ENCODE measurements at regions of chr2 and their contacts with region 1.

Region 1: DNA sequence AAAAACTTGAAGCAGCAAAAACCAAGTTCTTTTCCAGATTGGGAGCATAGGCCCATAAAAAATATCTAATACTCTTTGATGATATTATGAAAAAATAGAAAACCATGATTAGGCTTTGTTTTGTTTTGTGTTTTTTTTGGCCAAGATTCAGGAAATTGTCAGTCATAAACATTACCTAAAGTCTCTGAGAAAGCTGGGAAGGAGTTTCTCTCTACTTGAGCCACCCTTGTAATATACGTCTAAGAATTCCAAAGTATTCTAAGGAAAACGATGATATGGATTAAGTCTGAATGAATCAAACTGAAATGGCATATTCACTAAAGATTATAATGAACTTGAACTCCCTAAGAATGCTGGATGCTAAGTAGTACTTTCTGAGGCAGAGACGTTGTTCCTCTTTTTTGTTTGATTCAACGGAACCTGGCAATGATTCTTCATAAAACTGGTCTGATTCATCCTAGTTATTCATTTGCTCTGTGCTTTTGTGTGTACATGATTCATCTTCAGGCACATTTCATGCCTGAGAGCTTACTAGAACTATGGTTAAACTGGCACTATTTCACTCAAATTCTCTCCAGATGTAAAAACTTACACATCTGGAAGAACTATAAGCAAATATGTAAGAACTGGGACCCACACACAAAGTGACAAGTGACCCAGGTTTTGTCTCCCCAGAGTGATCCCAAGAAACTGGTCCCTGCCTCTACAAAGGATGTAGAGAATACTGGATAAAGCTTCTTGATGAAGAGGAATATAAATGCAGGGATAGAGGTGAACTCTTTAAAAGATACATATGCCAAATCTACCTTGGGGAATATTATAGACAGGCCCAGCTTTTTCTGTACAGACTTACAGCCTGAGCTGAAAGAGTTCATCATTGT is 159.7 kb downstream of the DOCK10 start:
- DNase-seq: peak; percentile 87
- ATAC-seq: peak; percentile 84
- H3K4me3 ChIP-seq: no peak overlapping the region
- H3K27ac ChIP-seq: peak overlapping the region; percentile 72
- H3K4me1 ChIP-seq: peaks cover 50% of the 10 kb centered on the region
- H3K27me3 ChIP-seq: no peaks in the 10 kb centered on the region
- CTCF ChIP-seq: no peak

Region 2: GRCh38 chr2:224816816-224817215 is 65.7 kb before region 1 on chr2:
- CTCF ChIA-PET with region 1: no interaction called
- POLR2A ChIA-PET with region 1: no interaction called
- intact Hi-C with region 1: loop called (anchors 5 kb)
- DNase-seq: peak; percentile 82
- ATAC-seq: peak; percentile 88
- H3K4me3 ChIP-seq: no peak overlapping the region
- H3K27ac ChIP-seq: peak overlapping the region; percentile 28
- H3K4me1 ChIP-seq: peaks cover 23% of the 10 kb centered on the region
- H3K27me3 ChIP-seq: no peaks in the 10 kb centered on the region
- CTCF ChIP-seq: no peak

Region 3: DNA sequence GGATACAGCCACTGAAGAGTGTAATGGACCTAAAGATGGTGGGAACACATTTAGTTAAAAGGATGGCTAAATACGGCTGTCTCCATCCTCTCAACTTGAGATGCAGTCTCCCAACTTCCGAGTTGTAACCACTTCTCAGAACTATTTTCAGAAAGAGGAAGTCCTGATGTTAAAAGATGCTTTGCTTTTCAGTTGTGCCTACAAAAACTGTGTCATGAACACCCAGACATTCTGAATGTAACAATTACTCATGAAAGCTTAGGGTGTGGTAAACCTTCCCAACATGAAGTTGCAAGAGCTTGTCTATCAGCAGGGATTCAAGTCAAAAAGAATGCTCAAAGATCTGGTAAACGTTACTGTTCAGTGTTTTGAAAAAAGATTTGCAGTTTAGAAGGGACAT is 11.8 kb after region 1 on chr2:
- CTCF ChIA-PET with region 1: no interaction called
- POLR2A ChIA-PET with region 1: no interaction called
- intact Hi-C with region 1: no loop called
- DNase-seq: no peak
- ATAC-seq: no peak
- H3K4me3 ChIP-seq: no peak overlapping the region
- H3K27ac ChIP-seq: no peak overlapping the region
- H3K4me1 ChIP-seq: no peaks in the 10 kb centered on the region
- H3K27me3 ChIP-seq: no peaks in the 10 kb centered on the region
- CTCF ChIP-seq: no peak

Region 4: GRCh38 chr2:225025917-225026571 is 143.5 kb after region 1 on chr2:
- CTCF ChIA-PET with region 1: no interaction called
- POLR2A ChIA-PET with region 1: no interaction called
- intact Hi-C with region 1: no loop called
- DNase-seq: peak; percentile 55
- ATAC-seq: peak; percentile 42; the same call in 1 of the 2 replicates
- H3K4me3 ChIP-seq: no peak overlapping the region
- H3K27ac ChIP-seq: no peak overlapping the region
- H3K4me1 ChIP-seq: peaks cover 24% of the 10 kb centered on the region
- H3K27me3 ChIP-seq: no peaks in the 10 kb centered on the region
- CTCF ChIP-seq: no peak

Region 5: DNA sequence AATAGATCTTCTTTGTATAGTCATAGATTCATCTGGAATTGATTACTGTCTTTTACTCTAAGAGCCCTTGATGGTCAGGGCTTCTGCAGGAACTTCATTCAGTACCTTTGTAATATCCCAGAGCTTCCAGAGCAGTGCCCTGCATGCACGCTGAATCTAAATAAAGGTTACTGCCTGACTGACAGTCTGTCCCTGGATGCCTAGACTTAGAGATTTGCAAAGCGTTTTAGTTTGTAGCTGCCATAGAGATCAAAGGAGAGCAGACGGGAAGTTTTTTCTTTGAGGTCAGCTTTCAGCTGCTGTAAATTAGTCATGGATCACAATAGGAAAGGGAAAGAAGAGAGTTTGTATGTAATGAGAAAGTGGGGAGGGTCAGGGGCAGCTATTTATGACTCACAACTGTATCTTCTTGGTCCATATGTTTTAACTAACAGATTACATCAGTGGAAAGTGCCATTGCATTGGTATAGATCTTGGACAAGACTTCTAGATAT is 471.8 kb after region 1 on chr2:
- CTCF ChIA-PET with region 1: no interaction called
- POLR2A ChIA-PET with region 1: no interaction called
- intact Hi-C with region 1: no loop called
- DNase-seq: peak; percentile 42
- ATAC-seq: peak; percentile 80
- H3K4me3 ChIP-seq: no peak overlapping the region
- H3K27ac ChIP-seq: no peak overlapping the region
- H3K4me1 ChIP-seq: no peaks in the 10 kb centered on the region
- H3K27me3 ChIP-seq: peaks cover 29% of the 10 kb centered on the region; the same call in 1 of the 2 replicates
- CTCF ChIP-seq: no peak

Measured in PC-3 (cell line).